ENCODE measurements at regions of chr3 and their contacts with region 1.

Region 1: GRCh38 chr3:153221748-153222162 is 59.7 kb downstream of the RAP2B start:
- DNase-seq: peak; percentile 63 to 95 (median 75)
- ATAC-seq: peak; percentile 92
- H3K4me3 ChIP-seq: peak overlapping the region; percentile 10
- H3K4me3 Mint-ChIP-seq: peak overlapping the region; percentile 72
- H3K27ac ChIP-seq: peak overlapping the region; percentile 78 to 84
- H3K27ac Mint-ChIP-seq: peak overlapping the region; percentile 91
- H3K4me1 ChIP-seq: peaks cover 53% of the 10 kb centered on the region
- H3K4me1 Mint-ChIP-seq: peaks cover 68% of the 10 kb centered on the region
- H3K27me3 ChIP-seq: no peaks in the 10 kb centered on the region
- H3K27me3 Mint-ChIP-seq: no peaks in the 10 kb centered on the region
- CTCF ChIP-seq: no peak

Region 2: DNA sequence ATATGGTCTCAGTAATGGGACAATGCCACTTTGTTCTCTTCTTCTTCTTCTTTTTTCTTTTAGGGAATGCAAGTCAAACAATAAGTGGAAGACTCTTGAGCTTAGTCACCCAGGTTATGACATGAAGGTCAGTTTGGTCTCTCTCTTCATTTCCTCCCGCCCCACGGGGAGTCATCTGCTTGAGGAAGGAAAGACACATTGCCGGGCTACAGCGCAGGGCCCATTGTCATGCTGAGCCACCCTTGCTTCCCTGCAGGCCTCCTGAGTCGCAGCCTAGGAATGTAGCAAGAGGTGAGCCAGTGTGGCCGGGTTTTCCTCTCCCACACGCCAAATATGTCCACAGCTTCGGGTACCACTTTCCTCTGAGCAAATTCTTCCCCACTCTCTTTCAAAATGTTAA is 12.2 kb before region 1 on chr3:
- CTCF ChIA-PET with region 1: interaction called, 4 read pairs
- POLR2A ChIA-PET with region 1: interaction called, 28 read pairs
- intact Hi-C with region 1: no loop called
- DNase-seq: peak in 2 of 14 experiments; percentile 62 to 69
- ATAC-seq: no peak
- H3K4me3 ChIP-seq: peak overlapping the region; percentile 11
- H3K4me3 Mint-ChIP-seq: no peak overlapping the region
- H3K27ac ChIP-seq: no peak overlapping the region
- H3K27ac Mint-ChIP-seq: peak overlapping the region; percentile 26
- H3K4me1 ChIP-seq: peaks cover 15% of the 10 kb centered on the region
- H3K4me1 Mint-ChIP-seq: peaks cover 40% of the 10 kb centered on the region
- H3K27me3 ChIP-seq: no peaks in the 10 kb centered on the region
- H3K27me3 Mint-ChIP-seq: no peaks in the 10 kb centered on the region
- CTCF ChIP-seq: no peak

Region 3: DNA sequence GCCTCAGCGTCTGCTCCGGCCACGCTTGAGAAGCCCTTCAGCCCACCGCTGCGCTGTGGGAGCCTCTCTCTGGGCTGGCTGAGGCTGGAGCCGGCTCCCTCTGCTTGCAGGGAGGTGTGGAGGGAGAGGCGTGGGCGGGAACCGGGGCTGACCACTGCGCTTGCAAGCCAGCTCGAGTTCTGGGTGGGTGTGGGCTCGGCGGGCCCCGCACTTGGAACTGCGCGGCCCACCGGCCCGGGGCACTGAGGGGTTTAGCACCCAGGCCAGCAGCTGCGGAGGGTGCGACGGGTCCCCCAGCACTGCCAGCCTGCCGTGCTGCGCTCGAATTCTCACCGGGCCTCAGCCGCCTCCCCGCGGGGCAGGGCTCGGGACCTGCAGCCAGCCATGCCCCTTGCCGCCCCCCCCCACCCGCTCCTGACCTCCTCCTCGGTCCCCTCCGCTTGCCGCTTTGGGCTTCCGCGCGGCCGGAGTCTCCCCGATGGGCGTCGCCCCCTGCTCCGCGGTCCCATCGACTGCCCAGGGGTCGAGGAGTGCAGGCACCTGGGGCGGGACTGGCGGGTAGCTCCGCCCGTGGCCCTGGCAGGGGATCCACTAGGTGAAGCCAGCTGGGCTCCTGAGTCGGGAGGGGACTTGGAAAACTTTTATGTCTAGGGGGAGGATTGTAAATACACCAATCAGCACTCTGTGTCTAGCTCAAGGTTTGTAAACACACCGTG is 47.0 kb after region 1 on chr3:
- CTCF ChIA-PET with region 1: interaction called, 3 read pairs
- POLR2A ChIA-PET with region 1: no interaction called
- intact Hi-C with region 1: loop called in 1 of 2 experiments (anchors 5 kb)
- DNase-seq: no peak
- ATAC-seq: no peak
- H3K4me3 ChIP-seq: no peak overlapping the region
- H3K4me3 Mint-ChIP-seq: no peak overlapping the region
- H3K27ac ChIP-seq: no peak overlapping the region
- H3K27ac Mint-ChIP-seq: no peak overlapping the region
- H3K4me1 ChIP-seq: peaks cover 9% of the 10 kb centered on the region
- H3K4me1 Mint-ChIP-seq: peaks cover 12% of the 10 kb centered on the region
- H3K27me3 ChIP-seq: no peaks in the 10 kb centered on the region
- H3K27me3 Mint-ChIP-seq: no peaks in the 10 kb centered on the region
- CTCF ChIP-seq: no peak

Region 4: DNA sequence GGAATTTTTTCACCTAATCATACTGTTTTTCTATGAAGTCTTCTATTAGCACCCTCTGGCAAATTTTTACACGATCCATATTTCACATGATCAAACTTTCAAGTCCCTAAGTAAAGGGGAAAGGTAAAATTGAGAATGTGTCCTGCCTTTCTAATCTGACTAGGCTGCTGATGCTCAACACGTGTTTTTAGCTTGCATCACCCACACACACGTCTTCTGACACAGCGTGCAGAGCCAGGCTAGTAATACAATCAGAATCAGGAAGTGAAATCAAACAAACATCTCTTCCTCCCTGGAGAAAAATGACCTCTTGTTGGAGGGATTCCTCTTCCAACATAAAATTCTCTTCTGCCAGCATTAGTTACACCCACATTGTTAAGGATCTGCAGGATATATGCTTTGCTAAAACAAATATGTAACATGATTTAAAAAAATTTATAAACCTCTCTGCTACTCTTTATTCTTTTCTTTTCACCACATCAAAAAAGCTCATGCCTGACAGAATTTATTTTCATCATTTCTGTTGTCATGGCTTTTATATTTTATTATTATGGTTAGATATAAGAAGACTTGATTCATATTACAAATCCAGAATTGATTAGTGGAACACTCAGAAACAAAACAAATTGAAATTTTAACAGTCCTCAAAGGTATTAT is 62.7 kb after region 1 on chr3:
- CTCF ChIA-PET with region 1: no interaction called
- POLR2A ChIA-PET with region 1: interaction called, 14 read pairs
- intact Hi-C with region 1: loop called (anchors 2 to 5 kb)
- DNase-seq: peak in 8 of 14 experiments; percentile 16 to 75 (median 40)
- ATAC-seq: peak; percentile 86
- H3K4me3 ChIP-seq: no peak overlapping the region
- H3K4me3 Mint-ChIP-seq: peak overlapping the region; percentile 43
- H3K27ac ChIP-seq: no peak overlapping the region
- H3K27ac Mint-ChIP-seq: peak overlapping the region; percentile 78
- H3K4me1 ChIP-seq: peaks cover 18% of the 10 kb centered on the region
- H3K4me1 Mint-ChIP-seq: peaks cover 46% of the 10 kb centered on the region
- H3K27me3 ChIP-seq: no peaks in the 10 kb centered on the region
- H3K27me3 Mint-ChIP-seq: no peaks in the 10 kb centered on the region
- CTCF ChIP-seq: no peak

Measured in CD4-positive, alpha-beta T cell (primary cell).